ENCODE measurements at regions of chr3 and their contacts with region 1.

Region 1: GRCh38 chr3:4986782-4987537 is 7.7 kb downstream of the BHLHE40 start:
- DNase-seq: peak; percentile 86
- H3K4me3 Mint-ChIP-seq: peak overlapping the region; percentile 76
- H3K27ac Mint-ChIP-seq: peak overlapping the region; percentile 87
- H3K4me1 Mint-ChIP-seq: peaks cover 69% of the 10 kb centered on the region
- H3K27me3 Mint-ChIP-seq: no peaks in the 10 kb centered on the region

Region 2: DNA sequence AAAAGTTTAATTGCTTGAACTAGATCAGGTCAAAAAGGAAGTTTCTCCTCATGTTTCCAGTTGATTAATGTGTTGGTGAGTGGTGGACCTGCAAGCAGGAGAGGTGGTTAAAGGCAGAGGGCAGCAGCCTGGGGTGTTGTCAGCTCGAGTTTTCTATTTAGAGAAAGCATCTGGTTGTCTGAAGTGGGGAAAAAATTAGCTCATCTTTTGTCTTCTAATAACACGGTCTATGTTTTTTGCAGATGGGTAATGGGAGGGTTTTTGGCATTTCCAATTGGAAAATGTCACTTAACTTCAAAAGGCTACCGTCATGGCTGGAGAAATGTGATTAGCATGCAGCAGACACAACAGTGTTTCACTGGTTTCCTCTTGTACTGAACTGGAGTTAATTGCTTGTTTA is 371.2 kb before region 1 on chr3:
- CTCF ChIA-PET with region 1: no interaction called
- POLR2A ChIA-PET with region 1: no interaction called
- DNase-seq: no peak
- H3K4me3 Mint-ChIP-seq: no peak overlapping the region
- H3K27ac Mint-ChIP-seq: no peak overlapping the region
- H3K4me1 Mint-ChIP-seq: no peaks in the 10 kb centered on the region
- H3K27me3 Mint-ChIP-seq: no peaks in the 10 kb centered on the region

Region 3: GRCh38 chr3:4722103-4722502 is 264.9 kb before region 1 on chr3:
- CTCF ChIA-PET with region 1: interaction called, 26 read pairs
- POLR2A ChIA-PET with region 1: interaction called, 6 read pairs
- DNase-seq: peak; percentile 45
- H3K4me3 Mint-ChIP-seq: no peak overlapping the region
- H3K27ac Mint-ChIP-seq: peak overlapping the region; percentile 50
- H3K4me1 Mint-ChIP-seq: peaks cover 50% of the 10 kb centered on the region
- H3K27me3 Mint-ChIP-seq: no peaks in the 10 kb centered on the region

Region 4: DNA sequence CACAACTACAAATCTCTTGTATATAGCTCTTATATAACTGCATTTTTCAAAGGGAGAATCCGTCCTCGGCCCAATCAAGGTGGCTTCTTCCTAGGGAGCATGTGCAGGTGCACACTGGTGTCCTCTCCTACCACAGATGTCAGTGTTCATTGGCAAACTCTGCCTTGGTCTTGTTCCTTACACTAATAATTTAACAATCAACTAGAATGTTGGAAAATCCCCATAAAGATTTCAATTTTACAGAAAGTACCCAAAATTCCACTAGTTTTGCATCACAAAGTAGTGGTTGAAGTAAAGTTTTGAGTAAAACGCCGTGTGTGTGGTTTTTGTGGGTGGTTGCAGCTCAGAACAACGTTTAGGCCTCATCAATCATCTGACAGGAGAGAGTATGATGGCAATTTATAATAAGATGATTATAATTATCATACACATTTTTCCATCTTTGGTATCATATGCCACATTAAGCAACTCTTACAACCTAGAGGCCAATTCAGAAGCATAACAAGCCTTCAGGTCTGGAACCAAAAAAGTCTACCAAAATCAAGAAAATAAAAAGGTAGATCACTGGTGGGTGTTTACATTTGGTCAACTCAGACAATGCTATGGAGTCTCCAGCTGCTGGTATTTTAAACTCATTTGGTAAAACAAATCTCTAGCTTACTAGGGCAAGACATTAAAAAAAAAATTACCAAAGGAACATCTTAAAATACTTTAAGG is 136.6 kb before region 1 on chr3:
- CTCF ChIA-PET with region 1: interaction called, 6 read pairs
- POLR2A ChIA-PET with region 1: interaction called, 822 read pairs
- DNase-seq: peak; percentile 69
- H3K4me3 Mint-ChIP-seq: peak overlapping the region; percentile 38
- H3K27ac Mint-ChIP-seq: peak overlapping the region; percentile 94
- H3K4me1 Mint-ChIP-seq: peaks cover 90% of the 10 kb centered on the region
- H3K27me3 Mint-ChIP-seq: no peaks in the 10 kb centered on the region

Region 5: DNA sequence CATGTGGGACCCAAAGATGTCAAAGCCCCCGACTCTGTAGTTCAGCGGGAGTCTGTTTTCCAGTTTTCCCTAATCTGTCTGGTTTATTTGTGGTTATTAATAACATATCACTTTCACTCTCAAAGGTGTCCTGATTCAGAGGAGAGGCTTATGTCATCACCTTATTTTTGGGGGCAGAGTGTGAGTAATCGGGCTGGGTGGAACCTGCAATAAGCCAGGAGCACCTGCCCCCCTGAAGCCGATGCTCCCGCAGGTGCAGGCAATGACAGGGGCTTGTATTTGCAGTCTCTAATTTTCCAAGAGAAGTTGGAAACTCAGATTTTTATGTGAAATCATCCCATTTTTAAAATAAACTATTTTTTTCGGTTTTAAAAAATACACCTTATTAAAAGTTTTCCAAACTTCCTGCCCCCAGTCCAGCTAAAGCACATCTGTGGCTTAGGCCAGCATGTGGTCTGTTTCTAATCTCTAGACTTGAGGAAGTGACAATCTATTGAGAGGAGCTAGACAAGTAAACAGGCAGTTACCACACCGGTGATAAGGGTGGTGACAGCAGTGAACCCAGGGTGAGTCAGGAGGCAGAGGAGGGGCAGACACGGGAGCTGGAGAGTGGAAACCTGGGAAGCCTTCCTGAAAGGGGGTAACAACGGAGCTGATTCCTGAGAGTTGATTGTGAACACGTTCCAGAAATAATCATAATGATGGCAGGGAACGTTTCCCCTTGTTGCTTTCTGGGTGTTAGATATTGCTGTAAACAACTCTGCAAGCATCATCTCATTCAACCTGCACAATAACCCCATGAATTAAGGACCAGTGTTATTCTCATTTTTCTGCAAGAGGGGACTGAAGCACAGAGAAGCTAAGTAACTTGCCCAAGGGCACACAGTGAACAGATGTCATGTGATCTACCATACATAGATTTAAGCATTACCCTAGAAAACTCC is 29.5 kb after region 1 on chr3:
- CTCF ChIA-PET with region 1: interaction called, 59 read pairs
- POLR2A ChIA-PET with region 1: interaction called, 588 read pairs
- DNase-seq: peak; percentile 73
- H3K4me3 Mint-ChIP-seq: no peak overlapping the region
- H3K27ac Mint-ChIP-seq: peak overlapping the region; percentile 87
- H3K4me1 Mint-ChIP-seq: peaks cover 95% of the 10 kb centered on the region
- H3K27me3 Mint-ChIP-seq: no peaks in the 10 kb centered on the region

Region 6: DNA sequence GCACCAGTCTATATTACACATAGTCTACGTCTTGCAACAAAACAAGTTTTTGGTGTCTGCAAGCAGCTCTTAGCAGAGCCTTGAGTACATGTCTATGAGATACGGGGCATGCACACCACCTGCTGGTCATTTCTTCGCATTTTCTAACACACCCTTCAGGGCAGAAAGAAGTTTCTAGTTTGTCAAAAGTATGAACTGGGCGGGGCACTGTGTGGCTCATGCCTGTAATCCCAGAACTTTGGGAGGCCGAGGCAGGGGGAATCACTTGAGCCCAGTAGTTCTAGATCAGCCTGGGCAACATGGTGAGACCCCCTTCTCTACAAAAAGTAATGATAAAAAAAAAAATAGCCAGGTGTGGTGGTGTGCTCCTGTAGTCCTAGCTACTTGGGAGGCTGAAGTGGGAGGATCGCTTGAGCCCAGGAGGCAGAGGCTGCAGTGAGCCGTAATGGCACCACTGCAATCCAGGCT is 70.9 kb after region 1 on chr3:
- CTCF ChIA-PET with region 1: interaction called, 69 read pairs
- POLR2A ChIA-PET with region 1: interaction called, 19 read pairs
- DNase-seq: peak; percentile 86
- H3K4me3 Mint-ChIP-seq: no peak overlapping the region
- H3K27ac Mint-ChIP-seq: no peak overlapping the region
- H3K4me1 Mint-ChIP-seq: peaks cover 50% of the 10 kb centered on the region
- H3K27me3 Mint-ChIP-seq: peaks cover 10% of the 10 kb centered on the region